Ovary (tissue), 10 donors: ENCODE measurements at regions of chr2 and their contacts with region 1.

Region 1: DNA sequence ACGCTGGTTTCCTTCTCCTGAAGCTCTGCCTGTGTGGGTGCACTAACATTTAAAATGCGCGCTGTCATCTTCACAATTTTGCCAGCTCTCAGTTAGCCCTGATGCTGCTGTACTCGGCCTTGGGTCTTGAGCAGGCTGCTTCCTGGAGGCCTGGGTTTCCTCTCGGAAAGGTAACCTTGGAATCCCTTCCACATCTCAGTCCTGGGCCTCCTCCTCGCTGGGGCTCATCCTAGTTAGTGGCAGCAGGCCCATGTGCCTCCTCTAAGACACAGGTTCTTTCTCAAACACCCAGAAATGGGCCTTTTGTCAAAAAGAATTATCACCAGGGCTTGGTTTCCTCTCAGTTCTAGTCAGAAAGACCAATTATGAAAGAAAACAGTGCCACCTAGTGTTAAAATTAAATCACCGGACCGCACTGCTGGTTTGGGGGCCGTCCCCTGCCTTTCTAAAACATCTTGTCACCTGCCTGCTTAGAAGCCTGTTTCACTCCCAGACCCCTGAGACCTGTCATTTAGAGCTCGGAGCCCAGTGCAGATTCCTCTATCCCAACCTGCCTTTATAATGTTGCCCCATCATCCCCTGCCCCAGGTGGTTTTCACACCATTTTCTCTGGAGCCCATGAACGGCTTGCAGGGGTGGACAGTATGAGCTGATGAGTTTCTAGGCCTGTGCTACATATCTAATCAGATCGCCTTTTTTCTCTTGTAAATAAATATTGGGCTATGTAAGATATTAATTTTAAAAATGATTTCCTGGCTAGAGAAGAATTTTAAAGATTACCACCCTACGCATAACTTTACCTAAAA is 42.4 kb downstream of the HK2 start:
- DNase-seq: peak; percentile 49 to 59 (median 54)
- H3K4me3 ChIP-seq: no peak overlapping the region
- H3K27ac ChIP-seq: peak overlapping the region; percentile 61 to 73
- H3K4me1 ChIP-seq: peaks cover 34% of the 10 kb centered on the region
- H3K27me3 ChIP-seq: no peaks in the 10 kb centered on the region
- CTCF ChIP-seq: peak; percentile 62 to 77 (median 73)
- EP300 ChIP-seq: no peak
- POLR2A ChIP-seq: no peak

Region 2: GRCh38 chr2:74690571-74690970 is 185.7 kb before region 1 on chr2:
- intact Hi-C with region 1: loop called in 2 of 4 experiments (anchors 5 to 10 kb)
- DNase-seq: no peak
- H3K4me3 ChIP-seq: no peak overlapping the region
- H3K27ac ChIP-seq: no peak overlapping the region
- H3K4me1 ChIP-seq: no peaks in the 10 kb centered on the region
- H3K27me3 ChIP-seq: no peaks in the 10 kb centered on the region
- CTCF ChIP-seq: peak; percentile 18 to 33 (median 28)
- EP300 ChIP-seq: no peak
- POLR2A ChIP-seq: no peak

Region 3: GRCh38 chr2:74715078-74715791 is 161.0 kb before region 1 on chr2:
- intact Hi-C with region 1: loop called (anchors 1 to 5 kb)
- DNase-seq: peak; percentile 81 to 89 (median 87)
- H3K4me3 ChIP-seq: peak overlapping the region; percentile 55
- H3K27ac ChIP-seq: peak overlapping the region; percentile 75 to 79
- H3K4me1 ChIP-seq: no peaks in the 10 kb centered on the region
- H3K27me3 ChIP-seq: no peaks in the 10 kb centered on the region
- CTCF ChIP-seq: peak; percentile 83 to 92 (median 88)
- EP300 ChIP-seq: no peak
- POLR2A ChIP-seq: peak; percentile 15

Region 4: GRCh38 chr2:74833418-74834233 is 42.7 kb before region 1 on chr2 and contains the start of gene HK2:
- intact Hi-C with region 1: loop called in 2 of 4 experiments (anchors 2 kb)
- DNase-seq: peak; percentile 87 to 92 (median 89)
- H3K4me3 ChIP-seq: peak within 1 kb of the TSS; percentile 65
- H3K27ac ChIP-seq: peak within 1 kb of the TSS; percentile 21 to 70
- H3K4me1 ChIP-seq: peaks cover 5% of the 10 kb centered on the region
- H3K27me3 ChIP-seq: no peaks in the 10 kb centered on the region
- CTCF ChIP-seq: no peak
- EP300 ChIP-seq: no peak
- POLR2A ChIP-seq: peak; percentile 47
- total RNA-seq, gene HK2: 11.8 to 39.4 (median 28.9) TPM